ENCODE measurements at regions of chr2 and their contacts with region 1.

Region 1: DNA sequence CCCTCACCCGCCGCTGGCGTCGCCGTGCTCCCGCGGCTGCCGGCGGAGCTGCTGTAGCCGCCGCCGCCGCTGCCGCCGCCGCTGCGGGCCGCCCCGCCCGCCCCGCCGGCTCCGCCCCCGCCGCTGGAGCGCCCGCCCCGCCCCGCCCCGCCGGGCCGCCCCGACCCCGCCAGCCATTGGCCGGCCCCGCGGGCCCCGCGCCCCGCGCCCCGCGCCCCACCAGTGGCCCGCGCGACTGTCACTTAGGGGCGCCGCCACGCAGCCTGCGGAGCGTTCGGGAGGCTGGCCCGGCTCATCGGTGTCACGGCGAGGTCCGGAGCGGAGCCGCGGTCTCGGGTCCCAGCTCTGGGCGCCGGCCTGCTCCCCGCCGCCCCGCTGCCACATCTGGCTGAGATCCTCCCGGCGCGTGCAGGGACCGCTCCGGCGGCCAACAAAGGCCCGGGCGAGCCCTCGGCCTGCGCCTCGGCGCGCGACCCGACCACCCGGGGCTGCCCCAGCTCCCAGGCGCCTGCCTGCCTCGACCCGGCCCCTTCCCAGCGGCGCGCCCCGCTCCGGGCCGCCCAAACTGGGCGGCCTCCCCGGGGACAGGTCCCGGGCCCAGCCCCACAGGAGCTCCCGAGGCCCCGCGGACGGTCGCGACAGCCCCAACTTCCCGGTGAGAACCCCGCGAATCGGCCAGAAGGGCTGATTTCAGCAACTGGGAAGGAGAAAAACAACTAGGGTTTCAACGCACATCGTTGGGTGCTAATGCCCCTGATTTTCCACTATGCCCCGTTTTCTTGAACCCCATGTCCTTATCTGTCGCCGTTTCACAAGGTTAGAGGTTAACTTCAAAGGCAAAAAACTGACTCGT is at the start of gene MGAT4A:
- DNase-seq: peak; percentile 62 to 90 (median 82)
- ATAC-seq: peak; percentile 76
- H3K4me3 ChIP-seq: peak within 1 kb of the TSS; percentile 80 to 93
- H3K4me3 Mint-ChIP-seq: peak within 1 kb of the TSS; percentile 93
- H3K27ac ChIP-seq: peak within 1 kb of the TSS; percentile 82 to 83
- H3K27ac Mint-ChIP-seq: peak within 1 kb of the TSS; percentile 97
- H3K4me1 ChIP-seq: peaks cover 49% of the 10 kb centered on the region
- H3K4me1 Mint-ChIP-seq: peaks cover 59% of the 10 kb centered on the region
- H3K27me3 ChIP-seq: no peaks in the 10 kb centered on the region
- H3K27me3 Mint-ChIP-seq: no peaks in the 10 kb centered on the region
- CTCF ChIP-seq: no peak
- total RNA-seq, gene MGAT4A: 226 to 229 TPM

Region 2: DNA sequence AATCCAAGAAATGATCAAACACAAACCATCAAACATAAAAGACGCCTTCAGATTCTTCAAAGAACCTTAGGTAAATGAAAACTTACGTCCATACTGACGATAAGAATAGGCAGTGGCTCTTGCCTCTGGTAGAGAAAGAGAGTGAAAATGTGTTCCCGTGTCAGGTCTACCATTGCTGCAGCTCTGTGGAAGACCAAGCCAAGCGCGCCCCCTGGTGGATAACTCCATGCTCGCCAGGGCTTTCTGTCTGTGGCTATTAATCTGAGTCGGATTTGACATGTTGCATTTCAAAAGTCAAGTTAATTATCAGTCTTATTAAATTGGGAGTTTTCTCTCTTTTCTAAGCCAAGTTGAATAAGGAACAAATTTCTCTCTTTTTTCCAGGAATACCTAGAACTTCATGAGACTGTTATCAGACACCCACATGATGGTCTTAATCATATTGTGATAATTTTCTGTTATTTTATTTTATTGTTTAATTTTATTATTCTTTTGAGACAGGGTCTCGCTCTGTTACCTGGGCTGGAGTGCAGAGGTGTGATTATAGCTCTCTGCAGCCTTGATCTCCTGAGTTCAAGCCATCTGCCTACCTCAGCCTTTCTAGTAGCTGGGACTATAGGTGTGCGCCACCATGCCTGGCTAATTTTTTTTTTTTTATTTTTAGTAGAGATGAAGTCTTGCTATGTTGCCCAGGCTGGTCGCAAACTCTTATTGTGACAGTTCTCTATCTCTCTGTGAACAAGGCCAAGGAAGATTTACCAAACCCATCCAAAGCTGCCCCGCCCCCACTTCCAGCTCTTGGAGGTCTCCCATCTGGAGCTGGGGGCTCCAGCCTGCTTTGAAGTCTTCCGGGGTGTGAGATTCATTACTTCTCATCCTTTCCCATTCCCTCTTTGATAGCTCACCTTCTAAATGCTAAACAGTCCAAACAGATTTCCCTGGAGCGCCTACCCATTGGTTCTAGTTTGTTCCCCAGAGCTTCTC is 1033.7 kb before region 1 on chr2:
- CTCF ChIA-PET with region 1: no interaction called
- POLR2A ChIA-PET with region 1: no interaction called
- intact Hi-C with region 1: no loop called
- DNase-seq: peak; percentile 86 to 98 (median 90)
- ATAC-seq: peak; percentile 92
- H3K4me3 ChIP-seq: no peak overlapping the region
- H3K4me3 Mint-ChIP-seq: peak overlapping the region; percentile 9
- H3K27ac ChIP-seq: no peak overlapping the region
- H3K27ac Mint-ChIP-seq: no peak overlapping the region
- H3K4me1 ChIP-seq: no peaks in the 10 kb centered on the region
- H3K4me1 Mint-ChIP-seq: peaks cover 7% of the 10 kb centered on the region
- H3K27me3 ChIP-seq: no peaks in the 10 kb centered on the region
- H3K27me3 Mint-ChIP-seq: no peaks in the 10 kb centered on the region
- CTCF ChIP-seq: peak; percentile 85

Region 3: DNA sequence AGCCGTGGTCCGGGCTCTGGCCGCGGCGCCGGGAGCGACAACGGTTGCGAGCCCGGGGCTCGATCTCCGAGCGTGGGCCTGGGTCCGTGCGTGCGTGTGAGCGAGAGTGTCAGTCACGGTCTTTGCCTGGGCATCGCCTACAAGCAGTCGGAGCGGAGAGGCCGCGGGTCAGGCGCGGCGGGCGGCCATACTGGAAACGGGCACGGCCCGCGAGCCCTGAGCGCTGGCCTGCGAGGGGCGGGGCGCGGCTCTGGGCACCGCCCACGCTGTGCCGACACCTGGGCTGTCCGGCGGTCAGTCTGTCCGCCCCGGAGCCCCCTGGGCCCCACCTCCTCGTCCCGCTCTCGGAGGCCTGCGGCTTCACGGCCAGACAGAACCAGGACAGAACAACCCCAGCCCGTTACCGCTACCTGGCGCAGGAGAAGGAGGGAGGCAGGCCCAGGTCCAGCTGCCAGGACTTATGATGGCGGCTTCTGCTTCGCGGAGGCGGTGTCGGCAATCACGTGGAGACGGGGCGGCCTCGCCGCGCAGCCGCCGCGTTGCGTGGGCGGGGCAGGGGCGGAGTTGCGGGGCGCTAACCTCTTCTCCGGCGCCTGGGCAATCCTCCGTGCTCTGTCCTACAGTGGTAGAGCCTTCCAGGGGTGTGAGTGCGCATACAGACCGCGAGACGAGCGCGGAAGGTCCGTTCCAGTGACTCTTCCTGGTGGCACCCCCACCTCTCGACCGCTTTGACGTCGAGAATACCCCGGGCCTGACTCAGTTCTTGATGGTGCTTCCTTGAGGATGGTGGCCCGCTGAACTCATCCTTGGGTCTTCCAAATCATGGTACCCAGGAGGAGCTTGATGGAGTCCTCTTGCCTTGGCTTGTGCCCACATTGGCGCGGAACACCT is 735.3 kb before region 1 on chr2 and contains the start of gene TMEM131:
- CTCF ChIA-PET with region 1: no interaction called
- POLR2A ChIA-PET with region 1: no interaction called
- intact Hi-C with region 1: loop called in 1 of 2 experiments (anchors 10 kb)
- DNase-seq: peak; percentile 92 to 97 (median 96)
- ATAC-seq: peak; percentile 82
- H3K4me3 ChIP-seq: peak within 1 kb of the TSS; percentile 68 to 95
- H3K4me3 Mint-ChIP-seq: peak within 1 kb of the TSS; percentile 90
- H3K27ac ChIP-seq: peak within 1 kb of the TSS; percentile 82 to 87
- H3K27ac Mint-ChIP-seq: peak within 1 kb of the TSS; percentile 97
- H3K4me1 ChIP-seq: peaks cover 36% of the 10 kb centered on the region
- H3K4me1 Mint-ChIP-seq: peaks cover 43% of the 10 kb centered on the region
- H3K27me3 ChIP-seq: no peaks in the 10 kb centered on the region
- H3K27me3 Mint-ChIP-seq: no peaks in the 10 kb centered on the region
- CTCF ChIP-seq: no peak
- total RNA-seq, gene TMEM131: 26.8 to 31.5 TPM

Region 4: GRCh38 chr2:98588880-98589431 is 142.3 kb before region 1 on chr2:
- CTCF ChIA-PET with region 1: no interaction called
- POLR2A ChIA-PET with region 1: no interaction called
- intact Hi-C with region 1: no loop called
- DNase-seq: no peak
- ATAC-seq: no peak
- H3K4me3 ChIP-seq: no peak overlapping the region
- H3K4me3 Mint-ChIP-seq: no peak overlapping the region
- H3K27ac ChIP-seq: no peak overlapping the region
- H3K27ac Mint-ChIP-seq: peak overlapping the region; percentile 73
- H3K4me1 ChIP-seq: no peaks in the 10 kb centered on the region
- H3K4me1 Mint-ChIP-seq: peaks cover 12% of the 10 kb centered on the region
- H3K27me3 ChIP-seq: no peaks in the 10 kb centered on the region
- H3K27me3 Mint-ChIP-seq: no peaks in the 10 kb centered on the region
- CTCF ChIP-seq: no peak

Region 5: GRCh38 chr2:98649135-98649991 is 81.9 kb before region 1 on chr2:
- CTCF ChIA-PET with region 1: interaction called, 17 read pairs
- POLR2A ChIA-PET with region 1: interaction called, 8 read pairs
- intact Hi-C with region 1: no loop called
- DNase-seq: peak; percentile 73 to 92 (median 83)
- ATAC-seq: peak; percentile 92
- H3K4me3 ChIP-seq: no peak overlapping the region
- H3K4me3 Mint-ChIP-seq: peak overlapping the region; percentile 37
- H3K27ac ChIP-seq: peak overlapping the region in 1 of 2 experiments; percentile 47
- H3K27ac Mint-ChIP-seq: peak overlapping the region; percentile 99
- H3K4me1 ChIP-seq: peaks cover 52% of the 10 kb centered on the region
- H3K4me1 Mint-ChIP-seq: peaks cover 63% of the 10 kb centered on the region
- H3K27me3 ChIP-seq: no peaks in the 10 kb centered on the region
- H3K27me3 Mint-ChIP-seq: no peaks in the 10 kb centered on the region
- CTCF ChIP-seq: peak; percentile 98

Region 6: DNA sequence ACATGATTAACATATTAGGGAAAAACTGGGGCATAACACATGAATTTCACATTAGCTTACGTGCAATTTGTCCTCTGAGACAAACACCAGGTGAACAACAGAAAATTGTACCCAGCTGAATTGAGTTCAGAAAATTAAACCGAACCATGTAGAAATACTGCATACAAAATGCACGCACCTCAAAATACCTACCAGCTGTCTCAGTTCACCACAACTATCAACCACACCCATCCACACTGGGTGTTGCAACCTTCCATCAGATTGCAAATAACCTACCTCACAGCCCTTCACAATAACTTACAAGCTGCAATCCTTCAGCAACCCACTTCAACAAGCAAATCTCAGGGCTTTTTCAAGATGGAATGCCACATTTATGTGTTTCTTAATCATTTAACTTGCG is 66.9 kb before region 1 on chr2:
- CTCF ChIA-PET with region 1: interaction called, 5 read pairs
- POLR2A ChIA-PET with region 1: interaction called, 49 read pairs
- intact Hi-C with region 1: loop called in 1 of 2 experiments (anchors 2 kb)
- DNase-seq: peak; percentile 19 to 86 (median 60)
- ATAC-seq: peak; percentile 68
- H3K4me3 ChIP-seq: peak overlapping the region; percentile 19 to 55
- H3K4me3 Mint-ChIP-seq: peak overlapping the region; percentile 64
- H3K27ac ChIP-seq: peak overlapping the region; percentile 54 to 80
- H3K27ac Mint-ChIP-seq: peak overlapping the region; percentile 95
- H3K4me1 ChIP-seq: peaks cover 64% of the 10 kb centered on the region
- H3K4me1 Mint-ChIP-seq: peaks cover 72% of the 10 kb centered on the region
- H3K27me3 ChIP-seq: no peaks in the 10 kb centered on the region
- H3K27me3 Mint-ChIP-seq: no peaks in the 10 kb centered on the region
- CTCF ChIP-seq: no peak

Region 7: DNA sequence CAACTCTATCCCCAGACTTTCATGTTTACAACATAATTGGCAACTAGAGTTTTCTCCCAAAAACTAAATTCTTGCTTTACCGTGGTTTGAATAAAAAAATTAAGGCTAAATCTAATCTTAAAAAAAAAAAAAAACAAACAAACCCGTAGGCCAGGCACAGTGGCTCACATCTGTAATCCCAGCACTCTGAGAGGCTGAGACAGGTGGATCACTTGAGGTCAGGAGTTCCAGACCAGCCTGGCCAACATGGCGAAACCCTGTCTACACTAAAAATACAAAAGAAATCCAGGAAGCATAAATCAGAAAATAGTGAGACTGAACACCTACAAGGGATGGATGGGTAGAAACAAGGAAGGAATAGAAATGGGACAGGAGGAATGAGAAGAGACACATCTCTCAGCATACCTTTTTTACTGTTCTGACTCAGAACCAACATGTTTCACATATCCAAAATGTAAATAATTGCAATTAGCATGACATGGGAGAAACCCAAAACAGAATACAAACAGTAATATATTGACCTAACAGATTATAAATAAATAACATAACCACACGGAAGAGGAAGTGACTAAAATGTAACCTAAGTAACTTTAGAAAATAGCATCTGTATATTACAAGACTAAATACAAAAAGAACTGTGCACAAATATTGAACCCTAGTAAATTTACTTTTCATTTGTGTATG is 17.8 kb before region 1 on chr2:
- CTCF ChIA-PET with region 1: interaction called, 4 read pairs
- POLR2A ChIA-PET with region 1: interaction called, 5 read pairs
- intact Hi-C with region 1: loop called in 1 of 2 experiments (anchors 1 kb)
- DNase-seq: no peak
- ATAC-seq: no peak
- H3K4me3 ChIP-seq: no peak overlapping the region
- H3K4me3 Mint-ChIP-seq: peak overlapping the region; percentile 22
- H3K27ac ChIP-seq: no peak overlapping the region
- H3K27ac Mint-ChIP-seq: peak overlapping the region; percentile 92
- H3K4me1 ChIP-seq: peaks cover 95% of the 10 kb centered on the region
- H3K4me1 Mint-ChIP-seq: peaks cover 96% of the 10 kb centered on the region
- H3K27me3 ChIP-seq: no peaks in the 10 kb centered on the region
- H3K27me3 Mint-ChIP-seq: no peaks in the 10 kb centered on the region
- CTCF ChIP-seq: no peak

Region 8: GRCh38 chr2:98757904-98758421 is 26.7 kb after region 1 on chr2:
- CTCF ChIA-PET with region 1: interaction called, 4 read pairs
- POLR2A ChIA-PET with region 1: interaction called, 31 read pairs
- intact Hi-C with region 1: loop called (anchors 2 kb)
- DNase-seq: peak in 8 of 9 experiments; percentile 22 to 87 (median 70)
- ATAC-seq: peak; percentile 69
- H3K4me3 ChIP-seq: peak overlapping the region; percentile 14 to 32
- H3K4me3 Mint-ChIP-seq: peak overlapping the region; percentile 77
- H3K27ac ChIP-seq: peak overlapping the region; percentile 37 to 66
- H3K27ac Mint-ChIP-seq: peak overlapping the region; percentile 97
- H3K4me1 ChIP-seq: peaks cover 50% of the 10 kb centered on the region
- H3K4me1 Mint-ChIP-seq: peaks cover 58% of the 10 kb centered on the region
- H3K27me3 ChIP-seq: no peaks in the 10 kb centered on the region
- H3K27me3 Mint-ChIP-seq: no peaks in the 10 kb centered on the region
- CTCF ChIP-seq: no peak

Region 9: GRCh38 chr2:98822301-98823164 is 91.3 kb after region 1 on chr2:
- CTCF ChIA-PET with region 1: interaction called, 22 read pairs
- POLR2A ChIA-PET with region 1: interaction called, 14 read pairs
- intact Hi-C with region 1: loop called (anchors 2 to 5 kb)
- DNase-seq: peak; percentile 37 to 83 (median 58)
- ATAC-seq: peak; percentile 91
- H3K4me3 ChIP-seq: peak overlapping the region; percentile 50 to 53
- H3K4me3 Mint-ChIP-seq: peak overlapping the region; percentile 58
- H3K27ac ChIP-seq: peak overlapping the region in 1 of 2 experiments; percentile 24
- H3K27ac Mint-ChIP-seq: no peak overlapping the region
- H3K4me1 ChIP-seq: peaks cover under 1% of the 10 kb centered on the region
- H3K4me1 Mint-ChIP-seq: peaks cover 22% of the 10 kb centered on the region
- H3K27me3 ChIP-seq: no peaks in the 10 kb centered on the region
- H3K27me3 Mint-ChIP-seq: no peaks in the 10 kb centered on the region
- CTCF ChIP-seq: peak; percentile 19

Measured in CD8-positive, alpha-beta T cell (primary cell).